Activated CD8-positive, alpha-beta T cell treated with anti-CD3 and anti-CD28 coated beads, Interleukin-2, amount 10 ng/mL, durations not matched to agents 7 days and 5 days (primary cell): ENCODE measurements at regions of chr1 and their contacts with region 1.

Region 1: DNA sequence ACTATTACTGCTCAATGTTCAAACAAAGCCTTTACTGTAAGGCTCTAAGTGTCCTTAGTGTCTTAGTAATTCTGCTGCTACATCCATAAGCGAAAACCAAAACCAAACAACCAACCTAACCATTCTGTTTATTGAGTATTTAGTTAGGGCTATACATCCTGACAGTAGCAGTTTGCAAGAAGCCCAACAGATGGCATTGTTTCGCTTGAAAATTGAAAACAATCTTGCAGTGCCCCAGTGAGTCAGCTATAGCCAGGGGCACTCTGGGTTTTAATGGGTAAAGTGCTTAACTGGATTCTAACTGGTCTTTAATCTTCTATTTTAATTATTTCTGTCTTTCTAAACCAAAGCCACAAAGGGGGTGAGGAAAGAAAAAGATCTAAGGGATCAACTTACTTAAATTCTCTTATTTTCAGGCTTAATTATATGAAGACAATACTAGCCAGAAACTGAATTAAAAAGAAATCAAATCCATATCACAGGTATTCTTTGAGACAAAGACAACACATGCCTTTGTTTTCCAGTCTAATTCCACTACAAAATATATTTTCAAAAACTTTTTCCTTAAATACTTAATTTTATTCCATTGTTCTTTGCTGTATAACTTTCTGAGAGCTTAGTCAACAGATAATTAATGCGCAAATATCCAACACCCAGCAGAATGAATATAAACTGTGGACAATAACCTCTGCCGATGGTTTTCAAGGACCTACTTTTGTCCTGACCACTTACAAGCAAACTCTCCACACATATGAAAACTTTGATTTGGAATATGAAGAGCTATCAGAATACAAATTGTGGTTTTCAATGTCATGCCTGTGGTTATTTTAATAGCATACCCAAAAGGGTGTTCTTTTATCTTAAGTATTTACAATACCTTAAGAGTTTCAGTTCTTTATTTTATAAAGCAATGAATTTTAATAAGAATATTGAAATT is 15.2 kb downstream of the POGZ start:
- DNase-seq: peak; percentile 82
- ATAC-seq: peak; percentile 95
- H3K4me3 Mint-ChIP-seq: no peak overlapping the region
- H3K27ac Mint-ChIP-seq: no peak overlapping the region
- H3K4me1 Mint-ChIP-seq: peaks cover 40% of the 10 kb centered on the region
- H3K27me3 Mint-ChIP-seq: no peaks in the 10 kb centered on the region

Region 2: GRCh38 chr1:151273925-151274466 is 170.1 kb before region 1 on chr1:
- CTCF ChIA-PET with region 1: no interaction called
- POLR2A ChIA-PET with region 1: no interaction called
- DNase-seq: no peak
- ATAC-seq: no peak
- H3K4me3 Mint-ChIP-seq: no peak overlapping the region
- H3K27ac Mint-ChIP-seq: no peak overlapping the region
- H3K4me1 Mint-ChIP-seq: no peaks in the 10 kb centered on the region
- H3K27me3 Mint-ChIP-seq: no peaks in the 10 kb centered on the region

Region 3: GRCh38 chr1:151455231-151455630 is 11.1 kb after region 1 on chr1:
- CTCF ChIA-PET with region 1: interaction called, 11 read pairs
- POLR2A ChIA-PET with region 1: no interaction called
- DNase-seq: no peak
- ATAC-seq: no peak
- H3K4me3 Mint-ChIP-seq: no peak overlapping the region
- H3K27ac Mint-ChIP-seq: no peak overlapping the region
- H3K4me1 Mint-ChIP-seq: peaks cover 23% of the 10 kb centered on the region
- H3K27me3 Mint-ChIP-seq: no peaks in the 10 kb centered on the region

Region 4: DNA sequence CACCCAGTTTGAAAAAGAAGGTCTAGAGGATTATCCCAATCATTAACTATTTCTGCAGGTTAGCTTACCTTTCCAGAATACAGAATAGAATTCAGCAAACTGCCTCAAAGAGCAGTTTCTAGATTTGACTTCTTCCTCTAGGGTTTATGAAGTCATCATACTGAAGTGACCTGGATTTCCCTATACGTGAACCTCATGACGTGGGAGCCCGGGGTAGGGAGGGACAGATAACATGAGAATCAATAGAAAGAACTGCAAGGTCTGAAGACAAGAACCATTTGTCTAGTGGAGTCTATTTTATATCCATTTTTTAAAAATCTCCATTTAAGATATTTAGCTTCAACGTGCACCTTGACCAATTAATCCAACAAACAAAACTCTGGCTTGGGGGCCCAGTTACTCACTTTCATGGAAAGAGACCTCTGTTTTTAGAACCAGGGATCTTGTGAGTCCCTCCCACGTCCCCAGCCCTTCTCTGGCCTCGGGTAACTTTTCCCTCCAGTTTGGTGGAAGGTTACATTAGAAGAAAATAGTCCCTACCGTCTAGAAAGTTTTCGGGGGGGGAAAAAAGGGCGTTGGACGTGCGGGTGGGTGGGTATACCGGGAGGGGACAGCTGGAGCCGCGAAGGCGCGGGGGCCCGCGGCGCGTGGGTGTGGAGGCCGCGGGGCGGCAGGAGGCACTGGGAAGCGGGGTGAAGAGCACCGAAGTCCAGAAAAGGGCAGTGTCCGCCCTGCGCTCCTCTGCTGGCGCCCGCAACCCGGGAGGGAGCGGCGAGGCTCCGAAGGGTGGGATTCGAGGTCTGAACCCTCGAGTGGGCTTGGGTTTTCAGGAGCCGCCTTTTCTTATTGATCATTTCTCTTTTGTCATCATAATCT is 29.0 kb after region 1 on chr1:
- CTCF ChIA-PET with region 1: interaction called, 11 read pairs
- POLR2A ChIA-PET with region 1: no interaction called
- DNase-seq: no peak
- ATAC-seq: no peak
- H3K4me3 Mint-ChIP-seq: peak overlapping the region; percentile 57
- H3K27ac Mint-ChIP-seq: peak overlapping the region; percentile 24
- H3K4me1 Mint-ChIP-seq: peaks cover 14% of the 10 kb centered on the region
- H3K27me3 Mint-ChIP-seq: peaks cover 6% of the 10 kb centered on the region

Region 5: DNA sequence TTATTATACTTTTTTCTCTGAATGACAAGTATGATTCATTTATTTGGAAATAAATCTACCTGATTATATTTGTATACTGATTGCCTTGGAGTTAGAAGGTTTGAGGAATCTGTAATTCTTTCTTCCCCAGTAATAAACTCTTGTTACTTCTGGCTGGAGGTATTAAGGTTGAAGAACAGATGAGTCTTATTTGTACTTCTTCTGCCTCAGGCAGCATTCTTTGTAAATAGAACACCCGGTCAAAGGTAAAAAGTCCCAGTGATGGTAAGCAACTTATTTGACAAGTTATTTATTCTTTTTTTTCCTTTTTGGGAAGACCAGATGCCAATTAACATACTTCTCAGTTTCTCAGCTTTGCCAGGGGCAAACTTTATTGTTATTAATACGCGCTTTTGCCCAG is 180.7 kb after region 1 on chr1:
- CTCF ChIA-PET with region 1: no interaction called
- POLR2A ChIA-PET with region 1: no interaction called
- DNase-seq: no peak
- ATAC-seq: no peak
- H3K4me3 Mint-ChIP-seq: no peak overlapping the region
- H3K27ac Mint-ChIP-seq: no peak overlapping the region
- H3K4me1 Mint-ChIP-seq: peaks cover 4% of the 10 kb centered on the region
- H3K27me3 Mint-ChIP-seq: no peaks in the 10 kb centered on the region

Region 6: GRCh38 chr1:151762941-151763921 is 319.1 kb after region 1 on chr1 and contains the start of gene MRPL9:
- CTCF ChIA-PET with region 1: no interaction called
- POLR2A ChIA-PET with region 1: no interaction called
- DNase-seq: peak; percentile 89
- ATAC-seq: peak; percentile 99
- H3K4me3 Mint-ChIP-seq: peak within 1 kb of the TSS; percentile 81
- H3K27ac Mint-ChIP-seq: peak within 1 kb of the TSS; percentile 91
- H3K4me1 Mint-ChIP-seq: peaks cover 30% of the 10 kb centered on the region
- H3K27me3 Mint-ChIP-seq: no peaks in the 10 kb centered on the region
- total RNA-seq, gene MRPL9: 111 to 121 TPM